ENCODE measurements at regions of chr9 and their contacts with region 1.

Region 1: GRCh38 chr9:121213136-121213806 is 11.6 kb upstream of the RAB14 start:
- DNase-seq: peak; percentile 86 to 88
- ATAC-seq: peak; percentile 94 to 99
- H3K4me3 ChIP-seq: no peak overlapping the region
- H3K27ac ChIP-seq: peak overlapping the region; percentile 12 to 74
- H3K4me1 ChIP-seq: no peaks in the 10 kb centered on the region
- CTCF ChIP-seq: peak; percentile 95
- EP300 ChIP-seq: no peak
- POLR2A ChIP-seq: no peak
- RAD21 ChIP-seq: peak; percentile 97

Region 2: GRCh38 chr9:120965344-120966012 is 247.8 kb before region 1 on chr9:
- CTCF ChIA-PET with region 1: no interaction called
- POLR2A ChIA-PET with region 1: no interaction called
- DNase-seq: no peak
- ATAC-seq: no peak
- H3K4me3 ChIP-seq: no peak overlapping the region
- H3K27ac ChIP-seq: no peak overlapping the region
- H3K4me1 ChIP-seq: no peaks in the 10 kb centered on the region
- CTCF ChIP-seq: no peak
- EP300 ChIP-seq: no peak
- POLR2A ChIP-seq: no peak
- RAD21 ChIP-seq: no peak

Region 3: DNA sequence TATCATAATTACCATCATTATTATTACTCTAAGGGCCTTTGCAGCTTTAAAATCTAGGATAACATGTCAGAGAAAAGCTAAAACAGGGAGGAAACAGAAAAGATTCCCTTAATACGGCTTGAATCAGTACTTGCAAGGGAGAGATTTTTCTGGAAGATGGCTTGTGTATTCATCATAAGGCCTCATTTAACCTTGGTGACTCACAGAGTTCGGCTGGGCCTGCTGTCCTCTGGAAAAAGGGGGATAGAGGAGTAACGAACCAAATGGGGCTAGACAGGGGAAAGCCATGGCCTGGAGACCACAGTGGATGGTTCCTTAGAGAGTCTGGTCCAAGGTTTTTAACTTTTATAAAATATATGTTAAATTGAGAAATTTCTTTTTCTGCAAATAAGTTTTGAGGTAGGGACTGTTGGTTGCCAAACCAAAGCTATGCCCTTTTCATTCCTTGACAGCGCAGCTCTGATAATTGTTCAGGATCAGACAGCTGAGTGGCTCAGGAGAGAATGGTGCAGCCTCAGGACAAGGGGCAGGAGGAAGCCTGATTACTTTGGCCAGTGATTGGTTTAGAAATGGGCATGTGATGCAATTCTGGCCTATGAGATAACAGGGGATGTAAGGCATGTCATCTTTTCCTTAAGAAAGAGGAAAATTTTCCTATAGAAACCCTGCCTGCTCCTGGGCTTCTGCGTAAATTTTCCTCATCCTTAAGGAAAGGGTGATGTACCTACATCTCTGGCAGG is 29.1 kb after region 1 on chr9:
- CTCF ChIA-PET with region 1: interaction called, 12 read pairs
- POLR2A ChIA-PET with region 1: no interaction called
- DNase-seq: no peak
- ATAC-seq: no peak
- H3K4me3 ChIP-seq: no peak overlapping the region
- H3K27ac ChIP-seq: no peak overlapping the region
- H3K4me1 ChIP-seq: no peaks in the 10 kb centered on the region
- CTCF ChIP-seq: no peak
- EP300 ChIP-seq: no peak
- POLR2A ChIP-seq: no peak
- RAD21 ChIP-seq: no peak

Region 4: DNA sequence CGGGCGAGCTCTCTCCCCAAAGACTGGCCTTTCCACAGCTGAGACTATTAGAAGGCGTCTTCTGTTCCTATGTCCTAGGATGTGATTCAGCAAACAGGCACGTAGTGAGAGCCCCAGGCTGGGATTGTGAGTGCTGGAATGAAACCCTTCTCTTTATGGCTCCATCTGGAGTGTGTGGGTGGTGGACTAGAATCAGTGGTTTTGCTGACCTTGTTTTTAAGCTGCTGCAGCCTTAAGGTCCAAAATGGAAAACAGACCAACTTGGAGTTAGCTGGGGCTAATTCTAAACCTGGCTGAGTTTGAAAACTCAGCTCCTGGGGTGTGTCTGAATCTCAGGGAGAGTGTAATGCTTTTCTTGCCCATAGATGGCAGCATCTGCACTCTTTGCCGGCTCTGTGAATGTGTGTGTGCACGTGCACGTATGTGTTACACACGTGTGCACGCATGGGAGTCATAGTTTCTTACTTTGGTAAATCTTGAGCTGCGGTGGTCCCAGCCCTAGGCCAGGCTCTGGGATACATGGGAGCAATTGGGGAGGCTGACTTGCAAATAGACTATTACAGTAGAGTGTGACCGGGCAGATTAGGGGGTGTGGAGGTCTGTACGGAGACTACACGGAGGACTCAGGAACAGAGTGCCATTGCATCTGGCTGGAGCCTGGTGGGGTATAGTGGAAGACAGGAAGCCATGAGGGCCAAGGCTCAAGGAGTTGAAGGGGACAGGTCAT is 65.4 kb after region 1 on chr9:
- CTCF ChIA-PET with region 1: interaction called, 40 read pairs
- POLR2A ChIA-PET with region 1: no interaction called
- DNase-seq: peak in 1 of 2 experiments; percentile 75
- ATAC-seq: peak; percentile 75 to 87
- H3K4me3 ChIP-seq: no peak overlapping the region
- H3K27ac ChIP-seq: peak overlapping the region; percentile 58 to 83
- H3K4me1 ChIP-seq: peaks cover 57% of the 10 kb centered on the region
- CTCF ChIP-seq: peak; percentile 88
- EP300 ChIP-seq: no peak
- POLR2A ChIP-seq: no peak
- RAD21 ChIP-seq: peak; percentile 80 to 85

Region 5: GRCh38 chr9:121326130-121326838 is 113.0 kb after region 1 on chr9:
- CTCF ChIA-PET with region 1: interaction called, 174 read pairs
- POLR2A ChIA-PET with region 1: no interaction called
- DNase-seq: peak in 1 of 2 experiments; percentile 88
- ATAC-seq: peak; percentile 38 to 65; a peak in 5 of 6 replicates
- H3K4me3 ChIP-seq: no peak overlapping the region
- H3K27ac ChIP-seq: peak overlapping the region; percentile 90 to 92
- H3K4me1 ChIP-seq: peaks cover 61% of the 10 kb centered on the region
- CTCF ChIP-seq: no peak
- EP300 ChIP-seq: peak in 1 of 2 experiments; percentile 24; a peak in 1 of 5 replicates
- POLR2A ChIP-seq: no peak
- RAD21 ChIP-seq: no peak

Region 6: DNA sequence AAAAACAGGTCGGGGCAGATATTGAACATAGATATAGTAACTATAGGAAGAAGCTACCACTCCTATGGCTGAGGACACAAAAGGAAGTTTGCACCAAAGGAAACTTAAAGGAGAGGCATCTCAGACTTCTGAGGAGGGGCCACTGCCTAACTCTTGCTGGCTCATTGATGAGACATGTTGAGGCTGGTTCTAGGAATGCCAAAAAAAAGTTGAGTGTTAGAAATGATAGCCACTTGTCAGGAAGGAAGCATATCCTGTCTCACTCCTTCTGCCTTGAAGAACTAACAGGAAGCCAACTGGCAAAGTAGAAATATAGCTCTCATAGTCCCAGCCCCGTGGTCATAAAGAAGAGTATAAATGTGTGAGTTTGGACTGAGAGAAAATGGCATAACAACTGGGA is 180.0 kb after region 1 on chr9:
- CTCF ChIA-PET with region 1: interaction called, 123 read pairs
- POLR2A ChIA-PET with region 1: no interaction called
- DNase-seq: no peak
- ATAC-seq: no peak
- H3K4me3 ChIP-seq: no peak overlapping the region
- H3K27ac ChIP-seq: no peak overlapping the region
- H3K4me1 ChIP-seq: no peaks in the 10 kb centered on the region
- CTCF ChIP-seq: no peak
- EP300 ChIP-seq: no peak
- POLR2A ChIP-seq: no peak
- RAD21 ChIP-seq: no peak

Measured in A549 (cell line).